HCT116 (cell line): ENCODE measurements at regions of chr11 and their contacts with region 1.

Region 1: DNA sequence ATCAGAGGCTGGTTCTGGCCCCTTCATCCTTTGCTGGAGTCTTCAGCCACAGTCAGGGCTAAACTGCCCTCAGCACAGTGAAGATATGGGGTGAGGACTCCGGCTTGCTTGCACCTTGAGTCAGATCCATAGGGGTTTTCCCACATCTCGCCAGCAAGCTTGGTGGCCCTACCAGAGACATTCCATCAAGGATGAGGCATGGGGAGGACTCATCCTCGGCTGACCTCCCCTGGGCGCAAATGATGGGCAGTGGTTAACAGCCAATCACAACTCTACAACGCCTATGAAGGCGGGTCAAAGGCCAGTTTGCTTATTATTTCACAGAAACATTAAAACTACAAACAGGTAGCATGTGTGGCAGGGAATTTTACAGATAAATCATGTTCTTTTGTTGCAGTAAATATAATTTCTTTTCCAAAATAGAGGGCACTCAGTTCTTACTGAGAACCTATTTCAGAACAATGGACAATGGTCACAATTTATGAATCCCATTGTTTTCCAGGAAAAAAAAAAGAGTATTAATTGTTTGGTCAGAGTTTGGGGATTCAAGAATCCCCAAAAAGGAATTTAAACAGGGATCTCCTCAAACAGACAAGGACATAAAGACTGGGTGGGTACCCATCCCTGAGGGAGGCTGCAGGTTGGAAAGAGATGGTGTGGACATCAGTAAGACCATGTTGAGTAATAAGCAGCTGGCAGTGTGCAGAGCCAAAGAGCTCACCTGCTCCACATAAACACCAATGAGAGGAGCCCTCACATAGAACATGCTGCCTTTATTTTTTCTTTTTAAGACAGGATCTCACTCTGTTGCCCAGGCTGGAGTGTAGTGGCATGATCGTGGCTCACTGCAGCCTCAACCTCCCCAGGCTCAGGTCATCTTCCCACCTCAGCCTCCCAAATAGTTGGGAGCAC is 14.8 kb downstream of the PLAAT3 start:
- DNase-seq: no peak
- ATAC-seq: 0 out of 2 replicates have a peak, but pooled peaks have one; percentile 46
- H3K4me3 ChIP-seq: no peak overlapping the region
- H3K27ac ChIP-seq: no peak overlapping the region
- H3K4me1 ChIP-seq: 0 out of 4 replicates have a peak, but pooled peaks cover 0 to 2% of the 10 kb centered on the region in 2 experiments
- H3K27me3 ChIP-seq: no peaks in the 10 kb centered on the region
- CTCF ChIP-seq: no peak
- POLR2A ChIP-seq: no peak
- RAD21 ChIP-seq: no peak

Region 2: GRCh38 chr11:63404161-63404935 is 195.1 kb before region 1 on chr11:
- CTCF ChIA-PET with region 1: no interaction called
- POLR2A ChIA-PET with region 1: no interaction called
- RAD21 ChIA-PET with region 1: no interaction called
- intact Hi-C with region 1: no loop called
- DNase-seq: no peak
- ATAC-seq: no peak
- H3K4me3 ChIP-seq: no peak overlapping the region
- H3K27ac ChIP-seq: no peak overlapping the region
- H3K4me1 ChIP-seq: no peaks in the 10 kb centered on the region
- H3K27me3 ChIP-seq: peaks cover 18% of the 10 kb centered on the region
- CTCF ChIP-seq: no peak
- POLR2A ChIP-seq: no peak
- RAD21 ChIP-seq: no peak

Region 3: DNA sequence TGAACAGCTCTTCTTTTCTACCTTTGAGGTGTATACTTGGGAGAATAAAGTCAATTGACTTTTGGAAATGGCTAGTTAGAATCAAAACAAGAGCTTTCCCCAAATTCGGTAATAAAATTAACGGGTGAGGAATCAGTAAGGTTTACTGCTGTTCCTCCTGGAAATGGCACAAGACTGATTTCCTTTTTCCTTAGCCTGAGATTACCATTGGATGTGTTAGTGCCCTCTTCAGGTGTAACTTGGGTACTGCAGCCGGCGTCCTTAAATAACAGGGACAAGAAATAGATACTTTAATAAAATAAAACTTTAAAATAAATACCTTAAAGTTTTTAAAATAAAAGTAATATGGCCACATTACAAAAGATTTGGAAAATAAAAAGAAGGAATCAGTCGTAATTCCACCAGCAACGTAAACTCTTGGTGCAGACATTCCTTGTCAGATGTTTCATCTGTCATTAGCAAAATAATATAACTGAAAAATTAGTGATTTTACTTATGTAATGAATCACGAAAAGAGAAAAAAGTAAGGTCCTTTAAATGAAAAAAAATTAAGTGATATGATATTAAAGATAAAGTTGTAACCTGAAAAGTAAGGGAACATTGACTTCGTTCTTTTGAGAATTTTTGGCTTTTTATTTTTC is 139.4 kb after region 1 on chr11:
- CTCF ChIA-PET with region 1: no interaction called
- POLR2A ChIA-PET with region 1: no interaction called
- RAD21 ChIA-PET with region 1: no interaction called
- intact Hi-C with region 1: loop called (anchors 10 kb)
- DNase-seq: peak; percentile 64
- ATAC-seq: peak; percentile 58; the same call in 1 of the 2 replicates
- H3K4me3 ChIP-seq: no peak overlapping the region
- H3K27ac ChIP-seq: no peak overlapping the region
- H3K4me1 ChIP-seq: peaks cover 0 to 6% of the 10 kb centered on the region in 2 experiments; a peak in 1 of 4 replicates
- H3K27me3 ChIP-seq: no peaks in the 10 kb centered on the region
- CTCF ChIP-seq: peak; percentile 62 to 95 (median 72); a peak in 5 of 6 replicates
- POLR2A ChIP-seq: no peak
- RAD21 ChIP-seq: peak; percentile 74